PC-9 (cell line): ENCODE measurements at regions of chr9 and their contacts with region 1.

Region 1: GRCh38 chr9:126558051-126558665 is 55.6 kb upstream of the LMX1B start:
- DNase-seq: peak; percentile 41 to 75
- H3K4me3 ChIP-seq: no peak overlapping the region
- H3K27ac ChIP-seq: no peak overlapping the region
- H3K4me1 ChIP-seq: no peaks in the 10 kb centered on the region
- H3K27me3 ChIP-seq: peaks cover 44% of the 10 kb centered on the region
- CTCF ChIP-seq: peak; percentile 96

Region 2: DNA sequence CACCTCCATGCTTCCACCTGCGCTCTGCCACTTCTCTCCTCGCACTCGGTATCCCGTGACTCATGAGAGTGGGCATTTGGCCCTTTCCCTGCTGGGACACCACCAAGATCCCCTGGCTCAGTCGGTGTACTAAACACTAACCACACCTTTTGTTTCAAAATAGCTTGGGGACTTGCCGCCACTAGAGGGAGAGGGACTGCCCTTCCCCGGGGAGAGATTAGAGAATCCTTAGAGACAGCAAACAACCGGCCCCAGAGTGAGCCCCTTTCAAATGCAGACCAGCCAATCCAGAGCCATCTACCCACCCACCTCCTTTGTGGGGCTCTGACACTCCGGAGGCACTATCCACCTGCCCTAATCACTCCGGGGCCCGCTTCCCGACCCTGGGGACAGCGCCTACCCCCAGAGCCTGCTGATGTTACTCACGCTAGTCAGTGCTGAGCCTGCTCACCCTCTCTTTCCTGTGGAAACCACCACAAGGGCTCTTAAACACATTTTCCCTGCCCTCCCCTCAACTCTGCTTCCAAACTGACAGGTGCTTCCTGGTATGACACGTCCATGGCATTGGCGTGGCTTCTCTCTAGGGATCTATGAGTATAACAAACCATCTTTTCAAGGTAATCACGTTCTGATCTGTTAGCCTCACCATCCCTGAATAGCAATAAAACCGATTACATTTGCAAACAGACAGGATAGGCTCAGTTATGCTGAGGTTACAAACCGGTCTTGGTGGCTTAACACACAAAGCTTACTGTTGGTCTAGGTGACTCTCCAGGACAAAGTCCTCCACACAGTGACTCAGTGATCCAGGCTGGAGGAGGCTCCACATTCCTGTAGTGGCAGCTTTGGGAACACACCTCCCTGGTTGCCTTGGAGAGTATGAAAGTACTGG is 411.7 kb before region 1 on chr9:
- CTCF ChIA-PET with region 1: interaction called, 16 read pairs
- POLR2A ChIA-PET with region 1: no interaction called
- intact Hi-C with region 1: no loop called
- DNase-seq: peak in 1 of 2 experiments; percentile 15
- H3K4me3 ChIP-seq: no peak overlapping the region
- H3K27ac ChIP-seq: no peak overlapping the region
- H3K4me1 ChIP-seq: no peaks in the 10 kb centered on the region
- H3K27me3 ChIP-seq: peaks cover 95% of the 10 kb centered on the region
- CTCF ChIP-seq: peak; percentile 56; the same call in 1 of the 2 replicates

Region 3: DNA sequence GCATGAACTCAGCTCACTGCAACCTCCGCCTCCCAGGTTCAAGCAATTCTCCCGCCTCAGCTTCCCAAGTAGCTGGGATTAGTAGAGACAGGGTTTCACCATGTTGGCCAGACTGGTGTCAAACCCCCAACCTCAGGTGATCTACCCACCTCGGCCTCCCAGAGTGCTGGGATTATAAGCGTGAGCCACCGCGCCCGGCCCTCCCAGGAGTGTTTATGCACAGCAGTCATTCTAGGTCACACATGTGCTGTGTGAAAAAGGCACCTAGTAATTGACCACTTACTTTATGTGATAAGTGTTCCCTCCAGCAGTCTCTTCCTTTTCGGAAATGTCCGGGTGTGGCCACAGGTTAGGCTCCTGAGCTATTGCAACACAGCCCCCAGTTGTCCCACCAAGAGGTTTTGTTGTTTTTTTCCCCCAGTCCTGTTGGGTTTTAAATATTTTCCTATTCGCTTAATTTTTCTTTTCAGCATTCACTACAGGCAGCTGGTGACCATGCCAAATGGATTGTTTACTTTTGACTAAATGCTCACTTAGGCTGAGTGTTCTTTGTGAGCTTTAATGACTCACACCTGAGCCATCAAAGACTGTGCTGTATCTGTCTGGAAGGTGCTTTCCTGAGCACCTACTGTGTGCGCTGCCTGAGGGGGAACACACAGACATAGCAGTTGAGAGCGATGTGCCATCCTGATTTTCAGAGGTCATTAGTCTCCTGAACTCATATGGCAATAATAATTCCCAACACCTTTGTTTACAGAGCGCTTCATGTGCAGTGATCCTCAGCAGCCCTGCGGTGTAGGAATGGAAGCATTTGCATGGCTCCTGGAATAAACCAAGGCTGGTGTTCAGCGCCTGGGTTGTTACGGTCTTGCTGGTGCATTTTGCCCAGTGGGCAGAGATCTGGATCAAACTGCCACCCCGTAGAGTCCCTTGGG is 137.2 kb before region 1 on chr9:
- CTCF ChIA-PET with region 1: no interaction called
- POLR2A ChIA-PET with region 1: no interaction called
- intact Hi-C with region 1: no loop called
- DNase-seq: peak; percentile 26 to 88
- H3K4me3 ChIP-seq: no peak overlapping the region
- H3K27ac ChIP-seq: peak overlapping the region; percentile 69
- H3K4me1 ChIP-seq: peaks cover 35% of the 10 kb centered on the region
- H3K27me3 ChIP-seq: no peaks in the 10 kb centered on the region
- CTCF ChIP-seq: no peak

Region 4: GRCh38 chr9:126500684-126501382 is 57.3 kb before region 1 on chr9:
- CTCF ChIA-PET with region 1: interaction called, 11 read pairs
- POLR2A ChIA-PET with region 1: no interaction called
- intact Hi-C with region 1: loop called (anchors 1 kb)
- DNase-seq: peak; percentile 42 to 79
- H3K4me3 ChIP-seq: no peak overlapping the region
- H3K27ac ChIP-seq: no peak overlapping the region
- H3K4me1 ChIP-seq: no peaks in the 10 kb centered on the region
- H3K27me3 ChIP-seq: peaks cover 5% of the 10 kb centered on the region; the same call in 1 of the 2 replicates
- CTCF ChIP-seq: peak; percentile 93

Region 5: DNA sequence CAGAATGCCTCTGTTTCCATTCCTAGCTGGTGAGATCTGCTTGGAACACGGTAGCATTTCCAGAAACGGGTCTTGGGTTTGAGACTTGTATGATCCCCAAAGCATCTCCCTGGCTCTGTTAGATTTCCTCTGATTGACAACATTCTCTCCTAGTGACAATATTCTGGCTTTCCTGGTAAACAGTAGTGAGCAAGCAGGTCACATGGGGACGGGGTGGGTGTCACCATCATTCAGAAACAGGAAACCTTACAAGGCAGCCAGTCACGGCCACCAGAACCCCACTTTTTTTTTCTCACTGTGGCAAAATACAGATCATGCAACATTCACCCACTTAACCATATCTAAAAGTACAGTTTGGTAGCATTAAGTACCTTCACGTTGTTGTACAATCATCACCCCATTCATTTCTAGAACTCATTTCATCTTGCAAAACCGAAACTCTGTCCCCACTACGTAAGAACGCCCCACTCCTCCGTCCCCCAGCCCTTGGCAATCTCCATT is 34.5 kb before region 1 on chr9:
- CTCF ChIA-PET with region 1: interaction called, 17 read pairs
- POLR2A ChIA-PET with region 1: no interaction called
- intact Hi-C with region 1: no loop called
- DNase-seq: no peak
- H3K4me3 ChIP-seq: no peak overlapping the region
- H3K27ac ChIP-seq: no peak overlapping the region
- H3K4me1 ChIP-seq: no peaks in the 10 kb centered on the region
- H3K27me3 ChIP-seq: peaks cover 86% of the 10 kb centered on the region
- CTCF ChIP-seq: no peak

Region 6: GRCh38 chr9:126893079-126893478 is 334.9 kb after region 1 on chr9:
- CTCF ChIA-PET with region 1: no interaction called
- POLR2A ChIA-PET with region 1: no interaction called
- intact Hi-C with region 1: no loop called
- DNase-seq: no peak
- H3K4me3 ChIP-seq: no peak overlapping the region
- H3K27ac ChIP-seq: no peak overlapping the region
- H3K4me1 ChIP-seq: peaks cover 10% of the 10 kb centered on the region
- H3K27me3 ChIP-seq: no peaks in the 10 kb centered on the region
- CTCF ChIP-seq: peak; percentile 37; the same call in 1 of the 2 replicates